Activated T-helper 2 cell treated with anti-CD3 and anti-CD28 coated beads, Interferon-gamma antibody, Interleukin-2, Interleukin-4, amounts not matched to agents 10 μg/mL and 5 μg/mL and 100 μg/mL, durations not matched to agents 14 hours and 24 hours and 36 hours (primary cell): ENCODE measurements at regions of chr7 and their contacts with region 1.

Region 1: GRCh38 chr7:37311355-37311754 is 137.3 kb downstream of the ELMO1 start:
- DNase-seq: no peak
- H3K4me3 Mint-ChIP-seq: no peak overlapping the region
- H3K27ac Mint-ChIP-seq: peak overlapping the region; percentile 93
- H3K4me1 Mint-ChIP-seq: peaks cover 43% of the 10 kb centered on the region
- H3K27me3 Mint-ChIP-seq: no peaks in the 10 kb centered on the region

Region 2: DNA sequence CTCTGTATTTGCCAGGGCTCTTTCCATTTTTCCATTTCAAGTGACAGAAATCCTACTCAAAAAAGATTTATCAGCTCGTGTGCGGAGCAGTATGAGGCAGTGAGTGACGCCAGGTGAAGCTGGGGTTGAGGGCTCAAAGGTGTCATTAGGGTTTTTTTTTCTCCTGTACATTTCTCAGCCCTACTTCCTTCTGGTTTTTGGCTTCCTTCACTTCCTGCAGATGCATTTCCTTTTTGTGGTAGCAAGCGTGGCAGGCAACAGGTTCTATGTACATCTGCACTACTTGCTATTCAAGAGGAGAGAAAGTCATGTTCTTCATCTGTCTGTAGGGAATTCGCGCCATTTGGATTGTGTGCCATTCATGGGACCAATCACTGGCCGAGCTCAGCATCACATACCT is 534.3 kb before region 1 on chr7:
- intact Hi-C with region 1: no loop called
- DNase-seq: peak; percentile 32
- H3K4me3 Mint-ChIP-seq: peak overlapping the region; percentile 64
- H3K27ac Mint-ChIP-seq: peak overlapping the region; percentile 74
- H3K4me1 Mint-ChIP-seq: peaks cover 66% of the 10 kb centered on the region
- H3K27me3 Mint-ChIP-seq: no peaks in the 10 kb centered on the region

Region 3: DNA sequence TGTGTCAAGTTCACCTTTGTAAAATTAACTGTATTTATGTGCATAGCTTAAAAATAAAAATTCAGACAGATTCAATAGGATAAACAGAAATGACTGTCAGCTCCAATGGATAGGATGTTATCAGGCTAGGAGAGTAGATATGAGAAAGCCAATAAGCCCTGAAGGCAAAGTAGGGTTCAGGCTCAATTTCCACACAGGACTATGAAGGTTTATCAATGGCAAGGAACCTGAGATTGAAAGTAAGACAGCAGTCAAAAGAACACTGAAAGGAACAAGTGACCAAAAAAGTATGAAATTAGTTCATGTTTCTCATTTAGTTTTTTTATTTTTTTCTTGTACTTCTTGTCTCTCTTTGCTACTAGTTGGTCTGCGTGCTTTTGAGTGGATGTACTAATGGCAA is 15.9 kb after region 1 on chr7:
- intact Hi-C with region 1: loop called (anchors 2 kb)
- DNase-seq: no peak
- H3K4me3 Mint-ChIP-seq: no peak overlapping the region
- H3K27ac Mint-ChIP-seq: peak overlapping the region; percentile 6
- H3K4me1 Mint-ChIP-seq: peaks cover 48% of the 10 kb centered on the region
- H3K27me3 Mint-ChIP-seq: no peaks in the 10 kb centered on the region